Activated T-helper 2 cell treated with anti-CD3 and anti-CD28 coated beads, Interferon-gamma antibody, Interleukin-2, Interleukin-4, amounts not matched to agents 10 μg/mL and 5 μg/mL and 100 μg/mL, durations not matched to agents 14 hours and 24 hours and 36 hours (primary cell): ENCODE measurements at regions of chr10 and their contacts with region 1.

Region 1: DNA sequence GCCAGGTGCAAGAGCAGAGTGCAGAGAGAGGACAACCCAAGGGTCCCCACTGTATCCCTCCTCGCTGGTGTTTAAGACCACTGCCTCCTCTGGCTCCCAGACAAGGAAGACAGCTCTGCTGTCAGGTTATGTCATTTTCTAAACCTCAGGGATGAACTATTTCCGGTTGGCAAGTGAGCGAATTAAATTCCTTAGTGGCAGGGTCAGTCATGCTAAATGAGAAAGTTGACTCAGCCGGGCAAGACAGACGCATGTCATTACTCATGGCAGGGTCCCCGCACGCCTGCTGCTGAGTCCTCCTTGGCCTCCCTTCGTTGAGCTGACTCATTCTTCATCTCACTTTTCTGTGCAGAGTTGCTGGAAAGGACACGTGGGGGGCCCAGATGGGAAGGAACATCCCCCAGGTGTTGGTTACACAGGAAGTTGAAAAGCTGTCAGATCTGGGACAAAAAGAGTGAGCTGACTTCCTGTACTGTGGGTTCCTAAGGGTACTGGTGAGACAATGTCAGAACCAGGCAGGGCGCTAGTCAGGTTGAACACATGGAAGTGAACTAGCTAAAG is 47.1 kb upstream of the UCN3 start:
- DNase-seq: peak; percentile 30
- H3K4me3 Mint-ChIP-seq: peak overlapping the region; percentile 19
- H3K27ac Mint-ChIP-seq: peak overlapping the region; percentile 18
- H3K4me1 Mint-ChIP-seq: peaks cover 34% of the 10 kb centered on the region
- H3K27me3 Mint-ChIP-seq: no peaks in the 10 kb centered on the region

Region 2: DNA sequence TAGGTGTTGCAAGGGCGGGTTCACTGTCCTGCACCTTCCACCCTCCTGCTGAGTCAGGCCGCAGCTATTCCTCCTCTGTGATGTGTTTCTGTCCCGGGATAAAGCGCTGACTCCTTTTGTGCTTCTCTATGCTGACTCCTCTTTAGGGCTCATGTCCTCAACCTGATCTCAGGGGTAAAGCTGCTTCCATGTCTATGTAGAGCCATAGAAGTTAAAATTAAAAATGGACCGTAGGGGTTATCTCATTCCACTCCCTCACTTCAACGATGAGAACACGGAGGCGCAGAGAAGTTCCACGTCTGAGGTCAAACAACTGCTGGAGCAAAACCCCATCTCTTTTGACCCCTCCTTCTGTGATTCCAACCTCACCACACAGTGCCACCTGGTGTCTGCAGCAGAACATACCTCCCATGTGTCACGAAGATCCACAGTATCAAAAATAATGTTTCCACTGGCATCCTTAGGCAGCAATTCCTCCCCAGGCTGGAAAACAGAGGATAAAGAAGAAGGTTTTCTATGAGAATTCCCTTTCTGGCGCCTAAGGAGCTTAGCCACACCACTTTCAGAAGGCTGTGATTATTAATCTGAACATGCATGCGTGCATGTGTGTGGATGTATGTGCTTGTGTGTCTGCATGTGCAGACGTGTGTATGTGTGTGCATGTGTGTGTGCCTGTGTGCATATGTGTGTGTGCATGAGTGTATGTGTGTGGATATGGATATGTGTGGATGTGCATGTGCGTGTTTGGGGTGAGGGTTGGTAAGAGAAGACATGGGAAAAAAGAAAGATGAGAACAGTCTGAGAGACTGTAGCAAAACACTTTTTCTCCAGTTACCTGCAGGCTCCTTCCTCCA is 34.1 kb before region 1 on chr10:
- intact Hi-C with region 1: loop called (anchors 5 kb)
- DNase-seq: peak; percentile 50
- H3K4me3 Mint-ChIP-seq: no peak overlapping the region
- H3K27ac Mint-ChIP-seq: no peak overlapping the region
- H3K4me1 Mint-ChIP-seq: peaks cover 30% of the 10 kb centered on the region
- H3K27me3 Mint-ChIP-seq: no peaks in the 10 kb centered on the region